ENCODE measurements at regions of chr20 and their contacts with region 1.

Region 1: GRCh38 chr20:47205577-47206498 is 150.7 kb downstream of the ZMYND8 start:
- DNase-seq: peak; percentile 82
- ATAC-seq: peak; percentile 88
- H3K4me3 Mint-ChIP-seq: no peak overlapping the region
- H3K27ac Mint-ChIP-seq: no peak overlapping the region
- H3K4me1 Mint-ChIP-seq: peaks cover 6% of the 10 kb centered on the region
- H3K27me3 Mint-ChIP-seq: no peaks in the 10 kb centered on the region

Region 2: GRCh38 chr20:47304287-47304686 is 98.4 kb after region 1 on chr20:
- CTCF ChIA-PET with region 1: no interaction called
- POLR2A ChIA-PET with region 1: no interaction called
- intact Hi-C with region 1: no loop called
- DNase-seq: no peak
- ATAC-seq: no peak
- H3K4me3 Mint-ChIP-seq: no peak overlapping the region
- H3K27ac Mint-ChIP-seq: no peak overlapping the region
- H3K4me1 Mint-ChIP-seq: peaks cover 20% of the 10 kb centered on the region
- H3K27me3 Mint-ChIP-seq: no peaks in the 10 kb centered on the region

Region 3: DNA sequence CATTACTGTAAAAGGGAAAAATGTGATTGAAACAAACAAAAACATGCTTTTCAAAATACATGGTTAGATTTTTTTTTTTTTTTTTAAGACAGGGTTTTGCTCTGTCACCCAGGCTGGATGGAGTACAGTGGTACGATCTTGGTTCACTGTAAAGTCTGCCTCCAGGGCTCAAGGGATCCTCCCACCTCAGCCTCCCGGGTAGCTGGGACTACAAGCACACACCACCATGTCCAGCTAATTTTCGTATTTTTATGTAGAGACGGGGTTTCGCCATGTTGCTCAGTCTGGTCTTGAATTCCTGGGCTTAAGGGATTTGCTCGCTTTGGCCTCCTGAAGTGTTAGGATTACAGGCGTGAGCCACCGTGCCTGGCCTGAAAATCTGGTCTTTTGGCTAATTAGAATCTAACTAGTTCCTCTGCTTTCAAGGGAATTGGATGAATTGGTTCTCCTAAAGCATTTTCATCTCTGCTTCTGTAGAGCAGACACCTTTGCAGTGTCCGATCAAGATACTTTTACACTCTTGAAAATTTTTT is 347.1 kb after region 1 on chr20:
- CTCF ChIA-PET with region 1: no interaction called
- POLR2A ChIA-PET with region 1: interaction called, 11 read pairs
- intact Hi-C with region 1: no loop called
- DNase-seq: no peak
- ATAC-seq: no peak
- H3K4me3 Mint-ChIP-seq: no peak overlapping the region
- H3K27ac Mint-ChIP-seq: no peak overlapping the region
- H3K4me1 Mint-ChIP-seq: peaks cover 42% of the 10 kb centered on the region
- H3K27me3 Mint-ChIP-seq: no peaks in the 10 kb centered on the region

Measured in activated CD4-positive, alpha-beta T cell treated with anti-CD3 and anti-CD28 coated beads for 36 hours (primary cell).